ENCODE measurements at regions of chr15 and their contacts with region 1.

Region 1: DNA sequence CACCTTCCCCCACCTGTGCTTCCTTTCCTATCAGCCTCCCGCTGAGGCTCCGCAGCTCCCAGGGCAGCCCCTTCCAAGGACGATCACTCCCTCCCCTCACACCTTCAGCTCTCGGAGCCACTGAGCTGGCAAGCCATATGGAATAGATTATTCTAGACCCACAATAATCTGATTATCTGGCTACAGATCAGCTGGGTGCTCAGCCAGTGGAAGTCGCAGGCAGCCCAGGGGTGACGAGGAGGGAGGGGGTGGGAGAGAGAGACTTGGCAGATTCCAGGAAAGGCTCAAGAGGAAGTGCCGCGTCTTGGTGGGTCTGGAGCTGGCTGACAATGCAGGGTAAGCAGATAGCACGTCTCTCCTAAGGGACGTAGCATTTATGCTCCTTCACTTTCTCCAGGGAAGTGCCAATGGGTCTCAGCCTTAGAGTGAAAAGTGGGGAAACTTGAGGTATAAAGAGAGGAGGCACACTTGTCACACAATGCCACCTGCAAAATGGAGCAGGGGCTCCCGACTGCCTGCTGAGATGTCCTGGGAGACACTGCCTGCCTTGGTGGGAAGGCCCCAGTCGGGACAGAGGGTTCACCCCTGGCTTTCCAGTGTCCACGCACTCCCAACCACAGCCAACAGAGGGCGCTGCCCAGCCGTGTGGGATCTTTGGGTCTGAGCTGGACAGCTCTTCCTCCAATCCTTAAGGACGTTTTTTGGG is 9.4 kb upstream of the MESP1 start:
- DNase-seq: peak; percentile 69 to 79 (median 76)
- H3K4me3 ChIP-seq: no peak overlapping the region
- H3K4me3 Mint-ChIP-seq: peak overlapping the region in 1 of 2 donors; percentile 11
- H3K27ac ChIP-seq: no peak overlapping the region
- H3K27ac Mint-ChIP-seq: peak overlapping the region in 2 of 7 donors; percentile 18 to 53
- H3K4me1 ChIP-seq: peaks cover 23 to 30% of the 10 kb centered on the region in 2 donors
- H3K4me1 Mint-ChIP-seq: peaks cover 20% of the 10 kb centered on the region
- H3K27me3 ChIP-seq: no peaks in the 10 kb centered on the region
- H3K27me3 Mint-ChIP-seq: peaks cover 0 to 7% (median 0%) of the 10 kb centered on the region in 3 donors
- CTCF ChIP-seq: peak; percentile 98

Region 2: GRCh38 chr15:89888214-89888804 is 127.9 kb after region 1 on chr15:
- intact Hi-C with region 1: loop called (anchors 2 kb)
- DNase-seq: peak in 2 of 3 donors; percentile 54 to 76
- H3K4me3 ChIP-seq: no peak overlapping the region
- H3K4me3 Mint-ChIP-seq: no peak overlapping the region
- H3K27ac ChIP-seq: no peak overlapping the region
- H3K27ac Mint-ChIP-seq: peak overlapping the region in 3 of 7 donors; percentile 28 to 72 (median 41)
- H3K4me1 ChIP-seq: peaks cover 22 to 39% of the 10 kb centered on the region in 2 donors
- H3K4me1 Mint-ChIP-seq: peaks cover 31% of the 10 kb centered on the region
- H3K27me3 ChIP-seq: no peaks in the 10 kb centered on the region
- H3K27me3 Mint-ChIP-seq: peaks cover 0 to 1% (median 0%) of the 10 kb centered on the region in 3 donors
- CTCF ChIP-seq: peak; percentile 68

Region 3: GRCh38 chr15:90400406-90401314 is 640.2 kb after region 1 on chr15:
- intact Hi-C with region 1: no loop called
- DNase-seq: peak; percentile 92 to 99 (median 98)
- H3K4me3 ChIP-seq: peak overlapping the region; percentile 11 to 60 (median 41)
- H3K4me3 Mint-ChIP-seq: peak overlapping the region; percentile 66 to 86
- H3K27ac ChIP-seq: peak overlapping the region; percentile 94 to 99
- H3K27ac Mint-ChIP-seq: peak overlapping the region; percentile 99 to 100 (median 99)
- H3K4me1 ChIP-seq: peaks cover 63 to 83% of the 10 kb centered on the region in 2 donors
- H3K4me1 Mint-ChIP-seq: peaks cover 70% of the 10 kb centered on the region
- H3K27me3 ChIP-seq: no peaks in the 10 kb centered on the region
- H3K27me3 Mint-ChIP-seq: no peaks in the 10 kb centered on the region
- CTCF ChIP-seq: no peak

Measured in CD14-positive monocyte (primary cell).